ENCODE measurements at regions of chr1 and their contacts with region 1.

Region 1: GRCh38 chr1:202132031-202132907 is 9.6 kb downstream of the GPR37L1 start:
- DNase-seq: no peak
- H3K4me3 ChIP-seq: peak overlapping the region; percentile 9 to 28
- H3K27ac ChIP-seq: peak overlapping the region; percentile 93
- H3K4me1 ChIP-seq: peaks cover 78% of the 10 kb centered on the region
- H3K27me3 ChIP-seq: no peaks in the 10 kb centered on the region
- CTCF ChIP-seq: no peak
- POLR2A ChIP-seq: no peak

Region 2: GRCh38 chr1:202009326-202010179 is 122.7 kb before region 1 on chr1:
- intact Hi-C with region 1: loop called (anchors 5 kb)
- DNase-seq: no peak
- H3K4me3 ChIP-seq: peak overlapping the region in 1 of 2 donors; percentile 0
- H3K27ac ChIP-seq: peak overlapping the region; percentile 54
- H3K4me1 ChIP-seq: peaks cover 28% of the 10 kb centered on the region
- H3K27me3 ChIP-seq: no peaks in the 10 kb centered on the region
- CTCF ChIP-seq: peak; percentile 61 to 82 (median 68)
- POLR2A ChIP-seq: no peak

Measured in vagina (tissue), 2 donors.